Calu3 (cell line): ENCODE measurements at regions of chr6 and their contacts with region 1.

Region 1: GRCh38 chr6:49744259-49744658 is at the start of gene CRISP3:
- DNase-seq: peak; percentile 2
- H3K4me3 Mint-ChIP-seq: no peak within 1 kb of the TSS
- H3K27ac Mint-ChIP-seq: no peak within 1 kb of the TSS
- H3K4me1 Mint-ChIP-seq: peaks cover 19% of the 10 kb centered on the region
- H3K27me3 Mint-ChIP-seq: no peaks in the 10 kb centered on the region
- CTCF ChIP-seq: no peak
- total RNA-seq, gene CRISP3: 1.5 and 7.0 TPM in 2 replicates

Region 2: DNA sequence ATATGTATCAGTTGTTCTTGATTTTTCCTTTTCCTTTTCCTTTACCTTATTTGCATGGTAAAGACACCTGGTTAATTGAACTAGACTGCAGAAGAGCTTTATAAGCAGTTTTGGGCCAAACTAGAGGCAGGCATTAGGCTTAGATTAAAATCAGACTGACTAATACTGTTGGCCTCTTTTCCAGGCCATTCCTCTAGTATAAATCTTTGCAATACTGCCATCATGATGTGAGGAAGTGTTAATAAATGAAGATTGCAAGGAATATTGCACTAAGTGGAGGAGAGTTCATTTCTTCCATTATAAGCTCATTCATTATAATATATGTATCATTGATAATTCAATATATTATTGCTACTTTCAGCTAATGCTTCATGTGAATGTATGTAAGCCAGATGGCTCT is 445.0 kb before region 1 on chr6:
- CTCF ChIA-PET with region 1: no interaction called
- intact Hi-C with region 1: no loop called
- DNase-seq: no peak
- H3K4me3 Mint-ChIP-seq: no peak overlapping the region
- H3K27ac Mint-ChIP-seq: no peak overlapping the region
- H3K4me1 Mint-ChIP-seq: no peaks in the 10 kb centered on the region
- H3K27me3 Mint-ChIP-seq: no peaks in the 10 kb centered on the region
- CTCF ChIP-seq: no peak

Region 3: GRCh38 chr6:49649988-49650387 is 94.3 kb before region 1 on chr6:
- CTCF ChIA-PET with region 1: no interaction called
- intact Hi-C with region 1: loop called (anchors 10 kb)
- DNase-seq: no peak
- H3K4me3 Mint-ChIP-seq: no peak overlapping the region
- H3K27ac Mint-ChIP-seq: no peak overlapping the region
- H3K4me1 Mint-ChIP-seq: no peaks in the 10 kb centered on the region
- H3K27me3 Mint-ChIP-seq: no peaks in the 10 kb centered on the region
- CTCF ChIP-seq: no peak

Region 4: GRCh38 chr6:49676696-49677281 is 67.5 kb before region 1 on chr6:
- CTCF ChIA-PET with region 1: no interaction called
- intact Hi-C with region 1: loop called (anchors 5 kb)
- DNase-seq: peak; percentile 42
- H3K4me3 Mint-ChIP-seq: peak overlapping the region; percentile 32
- H3K27ac Mint-ChIP-seq: peak overlapping the region; percentile 80
- H3K4me1 Mint-ChIP-seq: peaks cover 29% of the 10 kb centered on the region
- H3K27me3 Mint-ChIP-seq: no peaks in the 10 kb centered on the region
- CTCF ChIP-seq: no peak

Region 5: GRCh38 chr6:49692534-49692933 is 51.7 kb before region 1 on chr6:
- CTCF ChIA-PET with region 1: no interaction called
- intact Hi-C with region 1: loop called (anchors 5 kb)
- DNase-seq: no peak
- H3K4me3 Mint-ChIP-seq: no peak overlapping the region
- H3K27ac Mint-ChIP-seq: peak overlapping the region; percentile 28
- H3K4me1 Mint-ChIP-seq: peaks cover 11% of the 10 kb centered on the region
- H3K27me3 Mint-ChIP-seq: no peaks in the 10 kb centered on the region
- CTCF ChIP-seq: no peak

Region 6: DNA sequence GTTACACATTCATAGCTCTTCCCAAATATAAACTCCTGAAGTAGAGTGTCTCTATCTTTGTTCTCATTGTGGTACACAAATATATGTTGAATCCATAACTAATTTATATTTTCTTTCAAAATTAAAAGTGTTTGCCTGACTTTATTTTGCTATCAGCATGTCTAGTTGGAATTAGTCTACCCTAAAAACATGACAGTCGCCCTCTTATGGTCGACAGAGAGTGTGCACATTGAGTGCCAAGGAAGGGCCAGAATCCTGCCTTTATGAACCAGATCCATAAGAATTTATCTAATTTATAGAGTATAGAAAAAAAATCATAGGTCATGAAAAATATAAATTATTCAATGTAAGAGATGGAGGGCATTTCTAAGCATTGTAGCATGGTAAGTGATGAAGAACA is 317.8 kb after region 1 on chr6:
- CTCF ChIA-PET with region 1: interaction called, 12 read pairs
- intact Hi-C with region 1: no loop called
- DNase-seq: peak; percentile 16
- H3K4me3 Mint-ChIP-seq: no peak overlapping the region
- H3K27ac Mint-ChIP-seq: no peak overlapping the region
- H3K4me1 Mint-ChIP-seq: no peaks in the 10 kb centered on the region
- H3K27me3 Mint-ChIP-seq: no peaks in the 10 kb centered on the region
- CTCF ChIP-seq: peak; percentile 34